ENCODE measurements at regions of chr7 and their contacts with region 1.

Region 1: DNA sequence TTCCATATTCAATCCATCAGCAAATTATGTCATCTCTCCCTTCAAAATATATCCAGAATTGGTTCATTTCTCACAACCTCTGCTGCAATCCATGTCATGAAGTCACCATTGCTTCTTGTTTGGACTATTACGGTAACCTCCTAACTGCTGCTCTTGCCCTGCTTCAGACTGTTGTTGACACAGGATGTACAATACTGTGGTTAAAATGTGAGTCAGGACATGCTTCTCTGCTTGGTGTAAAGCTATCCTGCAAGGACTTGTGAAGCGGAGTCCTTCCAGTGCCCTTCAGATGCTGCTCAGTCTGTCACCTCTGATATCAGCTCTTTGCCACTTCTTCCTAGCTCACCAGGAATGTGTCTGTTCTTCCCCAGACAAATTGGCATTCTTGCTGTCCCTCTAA is 10.4 kb upstream of the NXPH1 start:
- DNase-seq: no peak
- H3K4me3 ChIP-seq: no peak overlapping the region
- H3K27ac ChIP-seq: no peak overlapping the region
- H3K4me1 ChIP-seq: no peaks in the 10 kb centered on the region
- H3K27me3 ChIP-seq: no peaks in the 10 kb centered on the region
- CTCF ChIP-seq: no peak

Region 2: GRCh38 chr7:8465338-8465737 is 42.3 kb after region 1 on chr7:
- intact Hi-C with region 1: no loop called
- DNase-seq: no peak
- H3K4me3 ChIP-seq: no peak overlapping the region
- H3K27ac ChIP-seq: no peak overlapping the region
- H3K4me1 ChIP-seq: no peaks in the 10 kb centered on the region
- H3K27me3 ChIP-seq: no peaks in the 10 kb centered on the region
- CTCF ChIP-seq: no peak

Region 3: DNA sequence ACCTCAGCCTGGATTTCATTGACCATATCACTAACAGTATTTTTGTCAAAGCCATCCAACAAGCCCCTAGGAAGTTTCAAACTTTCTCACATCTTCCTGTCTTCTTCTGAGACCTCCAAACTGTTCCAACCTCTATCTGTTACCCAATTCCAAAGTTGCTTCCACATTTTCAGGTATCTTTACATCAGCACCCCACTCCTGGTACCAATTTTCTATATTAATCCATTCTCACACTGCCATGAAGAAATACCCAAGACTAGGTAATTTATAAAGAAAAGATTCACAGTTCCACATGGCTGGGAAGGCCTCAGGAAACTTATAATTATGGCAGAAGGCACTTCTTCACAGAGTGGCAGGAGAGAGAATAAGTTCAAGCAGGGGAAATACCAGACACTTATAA is 1978.7 kb after region 1 on chr7:
- intact Hi-C with region 1: loop called (anchors 10 kb)
- DNase-seq: no peak
- H3K4me3 ChIP-seq: no peak overlapping the region
- H3K27ac ChIP-seq: no peak overlapping the region
- H3K4me1 ChIP-seq: no peaks in the 10 kb centered on the region
- H3K27me3 ChIP-seq: no peaks in the 10 kb centered on the region
- CTCF ChIP-seq: no peak